ENCODE measurements at regions of chr22 and their contacts with region 1.

Region 1: DNA sequence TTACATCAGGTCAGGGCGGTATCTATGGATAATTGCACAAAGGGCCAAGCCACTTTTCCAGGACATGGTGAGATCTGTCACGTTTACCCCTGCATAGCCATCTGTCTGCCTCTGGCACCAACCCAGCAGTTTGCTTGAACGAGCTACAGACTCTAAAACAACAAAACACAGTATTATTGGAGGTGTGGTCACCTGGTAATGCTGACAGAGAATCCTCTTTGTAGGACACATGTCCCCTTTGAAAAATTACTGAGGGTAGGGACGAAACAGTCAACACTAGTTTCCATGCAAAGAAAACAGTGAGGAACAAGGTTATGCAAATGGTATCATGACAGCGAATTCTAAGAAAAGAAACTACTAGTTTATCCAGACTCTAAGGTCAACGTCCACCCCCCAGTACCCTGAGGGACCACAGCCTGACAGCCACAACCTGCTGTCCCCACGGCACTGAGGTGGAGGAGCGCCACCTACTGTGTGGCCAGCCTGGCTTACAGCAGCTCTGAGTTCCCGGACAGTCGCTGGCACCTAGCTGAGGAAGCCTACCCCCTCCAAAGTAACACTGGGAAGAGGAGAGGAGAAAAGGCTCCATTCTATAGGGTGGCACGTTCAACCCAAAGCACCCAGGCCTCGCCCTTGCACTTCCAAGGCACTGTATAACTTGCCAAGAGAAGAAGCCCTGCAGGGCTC is 117.4 kb upstream of the BID start:
- DNase-seq: no peak
- H3K4me3 ChIP-seq: no peak overlapping the region
- CTCF ChIP-seq: peak; percentile 21

Region 2: DNA sequence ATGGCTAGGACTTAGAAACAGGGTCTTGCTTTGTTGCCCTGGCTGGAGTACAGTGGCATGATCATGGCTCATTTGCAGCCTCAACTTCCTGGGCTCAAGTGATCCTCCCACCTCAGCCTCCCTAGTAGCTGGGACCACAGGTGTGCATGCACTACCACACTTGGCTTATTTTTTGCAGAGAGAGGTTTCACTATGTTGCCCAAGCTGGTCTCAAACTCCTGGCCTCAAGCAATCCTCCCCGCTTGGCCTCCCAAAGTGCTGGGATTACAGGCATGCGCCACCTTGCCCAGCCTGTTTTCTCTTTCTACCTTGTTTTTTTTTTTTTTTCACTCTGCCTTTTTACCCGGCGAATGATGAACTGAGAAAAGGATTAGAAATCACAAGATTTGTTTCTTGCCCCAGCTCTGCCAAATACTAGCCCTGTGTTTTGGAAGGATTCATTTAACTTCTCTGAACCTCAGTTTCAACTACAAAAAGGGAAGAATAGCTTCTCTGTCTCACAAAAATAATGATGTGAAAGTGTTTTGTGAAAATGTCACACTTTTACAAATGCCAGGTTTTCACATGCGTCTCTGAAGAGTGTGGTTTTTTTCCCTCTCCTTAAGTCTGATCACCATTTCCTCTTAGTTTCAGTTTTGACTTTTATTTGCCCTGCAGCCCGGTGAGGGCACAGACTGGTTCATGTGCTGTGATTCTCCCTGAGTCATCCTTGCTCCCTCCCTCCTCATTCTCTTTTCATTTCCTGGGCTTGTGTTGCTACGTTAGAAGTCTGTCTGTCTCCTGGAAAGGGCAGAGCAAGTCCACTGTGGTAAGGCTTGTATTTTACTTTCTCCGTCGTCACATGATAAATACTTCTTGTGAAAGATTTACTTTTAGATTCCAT is 185.4 kb before region 1 on chr22:
- CTCF ChIA-PET with region 1: no interaction called
- POLR2A ChIA-PET with region 1: no interaction called
- DNase-seq: peak; percentile 79
- H3K4me3 ChIP-seq: peak overlapping the region; percentile 52
- CTCF ChIP-seq: no peak

Region 3: DNA sequence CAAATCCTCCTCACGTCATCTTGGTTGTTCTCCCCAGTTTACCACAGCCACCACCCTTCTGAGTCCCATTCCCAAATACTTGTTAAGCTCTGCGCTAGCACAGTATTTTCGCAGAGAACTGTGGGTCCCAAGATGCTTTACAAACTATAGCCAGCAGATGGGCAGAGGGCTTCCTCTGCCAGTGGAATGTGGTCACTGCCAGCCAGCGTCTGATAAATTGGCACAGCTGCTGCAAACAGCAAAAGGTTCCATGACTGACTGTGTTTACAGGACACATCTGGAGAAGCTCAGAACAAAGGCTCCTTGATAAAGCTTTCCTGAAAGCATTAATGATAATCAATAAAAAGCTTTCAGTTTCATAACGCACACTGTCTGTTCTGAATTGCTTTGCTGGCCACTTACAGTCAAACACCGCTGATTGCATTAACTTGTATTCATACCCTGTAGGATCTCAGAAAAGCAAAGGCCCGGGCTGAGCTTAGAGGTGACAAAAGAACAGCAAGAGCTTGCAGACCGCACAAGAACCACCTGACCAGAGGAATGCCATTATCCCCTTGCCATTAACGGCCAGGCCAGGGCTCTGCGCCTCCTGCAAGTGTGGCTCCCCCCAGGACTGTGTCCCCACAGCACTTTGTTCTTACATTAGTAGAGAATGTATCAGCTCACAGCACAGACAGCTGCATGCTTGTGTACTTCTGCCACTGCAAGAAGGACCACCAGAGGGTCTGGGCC is 12.1 kb after region 1 on chr22:
- CTCF ChIA-PET with region 1: interaction called, 15 read pairs
- POLR2A ChIA-PET with region 1: no interaction called
- DNase-seq: no peak
- H3K4me3 ChIP-seq: no peak overlapping the region
- CTCF ChIP-seq: no peak